ENCODE measurements at regions of chr15 and their contacts with region 1.

Region 1: GRCh38 chr15:31365655-31366127 is 39.1 kb downstream of the KLF13 start:
- DNase-seq: peak; percentile 53 to 82 (median 78)
- ATAC-seq: peak; percentile 68
- H3K4me3 ChIP-seq: peak overlapping the region; percentile 36
- H3K4me3 Mint-ChIP-seq: peak overlapping the region; percentile 72 to 88 (median 85)
- H3K27ac ChIP-seq: peak overlapping the region; percentile 94
- H3K27ac Mint-ChIP-seq: peak overlapping the region; percentile 92 to 99 (median 97)
- H3K4me1 ChIP-seq: peaks cover 87% of the 10 kb centered on the region in 2 donors
- H3K4me1 Mint-ChIP-seq: peaks cover 85 to 100% (median 99%) of the 10 kb centered on the region in 7 donors
- H3K27me3 ChIP-seq: no peaks in the 10 kb centered on the region
- H3K27me3 Mint-ChIP-seq: no peaks in the 10 kb centered on the region

Region 2: DNA sequence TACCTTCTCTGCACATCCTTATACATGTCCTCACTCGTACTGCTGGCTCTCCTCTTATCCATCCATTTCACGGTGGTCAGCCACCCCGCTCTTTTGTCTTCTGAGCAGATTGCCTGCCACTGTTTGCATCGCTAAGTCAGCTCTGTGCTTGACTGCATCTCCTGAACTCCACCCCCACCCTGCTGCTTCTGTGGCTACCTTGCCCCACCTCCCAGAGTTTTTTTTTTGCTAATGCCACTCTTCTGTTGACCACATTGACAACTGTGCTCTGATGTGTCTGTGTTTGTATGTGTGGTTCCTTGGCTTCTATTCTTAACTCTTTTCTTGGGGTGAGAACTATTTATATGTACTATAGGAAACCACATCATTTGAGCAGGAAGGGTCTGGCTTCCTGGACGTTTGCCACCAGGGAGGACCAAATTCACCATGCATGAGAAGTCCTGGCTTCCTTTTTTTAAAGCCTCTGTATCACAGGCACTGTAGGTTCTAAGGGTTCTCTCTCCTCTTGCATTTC is 361.4 kb before region 1 on chr15:
- CTCF ChIA-PET with region 1: no interaction called
- POLR2A ChIA-PET with region 1: no interaction called
- intact Hi-C with region 1: no loop called
- DNase-seq: no peak
- ATAC-seq: peak; percentile 79
- H3K4me3 ChIP-seq: no peak overlapping the region
- H3K4me3 Mint-ChIP-seq: peak overlapping the region in 1 of 10 donors; percentile 72
- H3K27ac ChIP-seq: no peak overlapping the region
- H3K27ac Mint-ChIP-seq: peak overlapping the region in 1 of 9 donors; percentile 19
- H3K4me1 ChIP-seq: no peaks in the 10 kb centered on the region
- H3K4me1 Mint-ChIP-seq: peaks cover 6 to 26% (median 11%) of the 10 kb centered on the region in 7 donors
- H3K27me3 ChIP-seq: peaks cover 4 to 8% of the 10 kb centered on the region in 2 donors
- H3K27me3 Mint-ChIP-seq: peaks cover 4 to 79% (median 9%) of the 10 kb centered on the region in 5 donors

Region 3: GRCh38 chr15:31215490-31216214 is 150.0 kb before region 1 on chr15:
- CTCF ChIA-PET with region 1: interaction called, 5 read pairs
- POLR2A ChIA-PET with region 1: interaction called, 17 read pairs
- intact Hi-C with region 1: loop called (anchors 1 kb)
- DNase-seq: peak; percentile 53 to 84 (median 69)
- ATAC-seq: peak; percentile 84
- H3K4me3 ChIP-seq: peak overlapping the region; percentile 30
- H3K4me3 Mint-ChIP-seq: peak overlapping the region; percentile 50 to 90 (median 74)
- H3K27ac ChIP-seq: peak overlapping the region; percentile 76
- H3K27ac Mint-ChIP-seq: peak overlapping the region; percentile 84 to 91 (median 87)
- H3K4me1 ChIP-seq: peaks cover 11 to 14% of the 10 kb centered on the region in 2 donors
- H3K4me1 Mint-ChIP-seq: peaks cover 5 to 54% (median 41%) of the 10 kb centered on the region in 7 donors
- H3K27me3 ChIP-seq: no peaks in the 10 kb centered on the region
- H3K27me3 Mint-ChIP-seq: no peaks in the 10 kb centered on the region

Region 4: GRCh38 chr15:31332020-31332680 is 33.5 kb before region 1 on chr15:
- CTCF ChIA-PET with region 1: interaction called, 15 read pairs
- POLR2A ChIA-PET with region 1: interaction called, 529 read pairs
- intact Hi-C with region 1: loop called in 1 of 2 experiments (anchors 1 kb)
- DNase-seq: no peak
- ATAC-seq: no peak
- H3K4me3 ChIP-seq: peak overlapping the region; percentile 94
- H3K4me3 Mint-ChIP-seq: peak overlapping the region; percentile 85 to 99 (median 96)
- H3K27ac ChIP-seq: peak overlapping the region; percentile 98
- H3K27ac Mint-ChIP-seq: peak overlapping the region; percentile 21 to 99 (median 95)
- H3K4me1 ChIP-seq: peaks cover 75 to 78% of the 10 kb centered on the region in 2 donors
- H3K4me1 Mint-ChIP-seq: peaks cover 72 to 85% (median 78%) of the 10 kb centered on the region in 7 donors
- H3K27me3 ChIP-seq: no peaks in the 10 kb centered on the region
- H3K27me3 Mint-ChIP-seq: no peaks in the 10 kb centered on the region

Region 5: DNA sequence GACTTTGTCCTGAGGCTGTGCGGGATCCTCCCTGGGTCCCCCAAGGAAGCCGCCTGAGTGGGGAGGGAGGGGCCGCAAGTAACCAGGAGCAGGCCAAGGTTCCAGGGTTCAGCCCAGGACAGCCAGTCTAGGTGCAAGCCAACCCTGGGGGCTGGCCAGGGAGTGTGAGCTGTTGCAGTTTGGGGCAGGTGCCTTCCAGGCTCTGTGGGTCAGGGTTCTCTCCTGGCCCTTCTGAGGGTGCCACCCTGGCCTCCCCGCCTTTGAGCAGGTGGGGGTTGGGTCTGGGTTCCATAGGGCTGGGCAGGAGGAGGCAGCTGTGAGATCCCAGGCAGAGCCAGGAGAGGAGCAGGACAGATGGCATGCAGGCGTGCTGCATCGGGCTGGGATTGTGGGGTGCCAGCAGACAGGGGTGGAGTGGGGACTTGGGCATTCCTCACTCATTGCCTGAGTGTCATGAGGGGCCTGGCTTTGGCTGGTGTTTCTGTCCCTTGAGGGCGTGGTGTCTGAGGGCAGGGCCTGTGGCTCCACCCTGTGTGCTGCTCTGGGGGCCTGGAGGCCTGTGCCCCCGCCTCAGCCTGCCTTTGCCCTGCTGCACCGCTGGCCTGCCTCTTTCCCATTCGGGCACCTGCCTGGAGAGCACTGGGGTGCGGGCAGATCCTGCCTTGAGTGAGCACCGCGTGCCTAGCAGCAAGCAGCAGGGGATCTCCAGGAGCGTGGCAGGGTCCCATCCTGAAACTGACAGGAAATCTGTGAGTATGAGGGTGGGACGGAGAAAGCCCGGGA is 20.7 kb before region 1 on chr15:
- CTCF ChIA-PET with region 1: interaction called, 47 read pairs
- POLR2A ChIA-PET with region 1: interaction called, 529 read pairs
- intact Hi-C with region 1: loop called (anchors 1 kb)
- DNase-seq: no peak
- ATAC-seq: no peak
- H3K4me3 ChIP-seq: peak overlapping the region; percentile 44
- H3K4me3 Mint-ChIP-seq: peak overlapping the region; percentile 75 to 94 (median 85)
- H3K27ac ChIP-seq: peak overlapping the region; percentile 94
- H3K27ac Mint-ChIP-seq: peak overlapping the region; percentile 75 to 99 (median 97)
- H3K4me1 ChIP-seq: peaks cover 98 to 100% of the 10 kb centered on the region in 2 donors
- H3K4me1 Mint-ChIP-seq: peaks cover 79 to 100% (median 98%) of the 10 kb centered on the region in 7 donors
- H3K27me3 ChIP-seq: no peaks in the 10 kb centered on the region
- H3K27me3 Mint-ChIP-seq: no peaks in the 10 kb centered on the region

Region 6: GRCh38 chr15:31391687-31392671 is 26.3 kb after region 1 on chr15:
- CTCF ChIA-PET with region 1: interaction called, 10 read pairs
- POLR2A ChIA-PET with region 1: interaction called, 24 read pairs
- intact Hi-C with region 1: loop called (anchors 1 kb)
- DNase-seq: peak; percentile 61 to 87 (median 73)
- ATAC-seq: peak; percentile 91
- H3K4me3 ChIP-seq: peak overlapping the region; percentile 72
- H3K4me3 Mint-ChIP-seq: peak overlapping the region; percentile 81 to 95 (median 90)
- H3K27ac ChIP-seq: peak overlapping the region; percentile 68
- H3K27ac Mint-ChIP-seq: peak overlapping the region; percentile 79 to 95 (median 88)
- H3K4me1 ChIP-seq: peaks cover 13 to 30% of the 10 kb centered on the region in 2 donors
- H3K4me1 Mint-ChIP-seq: peaks cover 21 to 61% (median 46%) of the 10 kb centered on the region in 7 donors
- H3K27me3 ChIP-seq: no peaks in the 10 kb centered on the region
- H3K27me3 Mint-ChIP-seq: no peaks in the 10 kb centered on the region

Region 7: GRCh38 chr15:31465083-31465955 is 99.6 kb after region 1 on chr15:
- CTCF ChIA-PET with region 1: no interaction called
- POLR2A ChIA-PET with region 1: no interaction called
- intact Hi-C with region 1: no loop called
- DNase-seq: no peak
- ATAC-seq: no peak
- H3K4me3 ChIP-seq: no peak overlapping the region
- H3K4me3 Mint-ChIP-seq: no peak overlapping the region
- H3K27ac ChIP-seq: no peak overlapping the region
- H3K27ac Mint-ChIP-seq: peak overlapping the region in 1 of 9 donors; percentile 18
- H3K4me1 ChIP-seq: no peaks in the 10 kb centered on the region
- H3K4me1 Mint-ChIP-seq: peaks cover 2 to 13% (median 5%) of the 10 kb centered on the region in 7 donors
- H3K27me3 ChIP-seq: no peaks in the 10 kb centered on the region
- H3K27me3 Mint-ChIP-seq: no peaks in the 10 kb centered on the region

Region 8: GRCh38 chr15:31483053-31483985 is 117.6 kb after region 1 on chr15:
- CTCF ChIA-PET with region 1: interaction called, 45 read pairs
- POLR2A ChIA-PET with region 1: interaction called, 38 read pairs
- intact Hi-C with region 1: loop called (anchors 1 kb)
- DNase-seq: peak; percentile 42 to 63 (median 53)
- ATAC-seq: peak; percentile 80
- H3K4me3 ChIP-seq: peak overlapping the region; percentile 59
- H3K4me3 Mint-ChIP-seq: peak overlapping the region; percentile 91 to 97 (median 96)
- H3K27ac ChIP-seq: no peak overlapping the region
- H3K27ac Mint-ChIP-seq: peak overlapping the region; percentile 90 to 97 (median 94)
- H3K4me1 ChIP-seq: peaks cover 26 to 35% of the 10 kb centered on the region in 2 donors
- H3K4me1 Mint-ChIP-seq: peaks cover 25 to 75% (median 54%) of the 10 kb centered on the region in 7 donors
- H3K27me3 ChIP-seq: no peaks in the 10 kb centered on the region
- H3K27me3 Mint-ChIP-seq: no peaks in the 10 kb centered on the region

Measured in naive thymus-derived CD4-positive, alpha-beta T cell (primary cell).